Sigmoid colon (tissue), 7 donors: ENCODE measurements at regions of chr14 and their contacts with region 1.

Region 1: GRCh38 chr14:91901449-91902226 is 34.3 kb upstream of the TC2N start:
- DNase-seq: peak; percentile 90
- H3K4me3 ChIP-seq: no peak overlapping the region
- H3K27ac ChIP-seq: peak overlapping the region; percentile 60 to 83 (median 64)
- H3K4me1 ChIP-seq: peaks cover 0 to 86% (median 67%) of the 10 kb centered on the region in 4 donors
- H3K27me3 ChIP-seq: no peaks in the 10 kb centered on the region
- CTCF ChIP-seq: no peak
- EP300 ChIP-seq: no peak
- POLR2A ChIP-seq: no peak

Region 2: GRCh38 chr14:91510174-91511042 is 391.2 kb before region 1 on chr14 and contains the start of gene PPP4R3A:
- intact Hi-C with region 1: loop called (anchors 5 kb)
- DNase-seq: peak; percentile 97
- H3K4me3 ChIP-seq: peak within 1 kb of the TSS; percentile 86 to 100 (median 96)
- H3K27ac ChIP-seq: peak within 1 kb of the TSS; percentile 99 to 100 (median 100)
- H3K4me1 ChIP-seq: peaks cover 0 to 36% (median 30%) of the 10 kb centered on the region in 4 donors
- H3K27me3 ChIP-seq: no peaks in the 10 kb centered on the region
- CTCF ChIP-seq: no peak
- EP300 ChIP-seq: peak in 3 of 4 donors; percentile 22 to 59 (median 46)
- POLR2A ChIP-seq: peak; percentile 68 to 82
- total RNA-seq, gene PPP4R3A: 69.6 to 78.9 (median 75.1) TPM

Region 3: GRCh38 chr14:91836119-91836881 is 65.3 kb before region 1 on chr14:
- intact Hi-C with region 1: loop called (anchors 10 kb)
- DNase-seq: peak; percentile 91
- H3K4me3 ChIP-seq: peak overlapping the region; percentile 43 to 76 (median 66)
- H3K27ac ChIP-seq: peak overlapping the region; percentile 68 to 83 (median 80)
- H3K4me1 ChIP-seq: peaks cover 0 to 17% (median 12%) of the 10 kb centered on the region in 4 donors
- H3K27me3 ChIP-seq: peaks cover 0 to 24% (median 0%) of the 10 kb centered on the region in 3 donors
- CTCF ChIP-seq: no peak
- EP300 ChIP-seq: no peak
- POLR2A ChIP-seq: peak in 1 of 2 donors; percentile 19

Region 4: DNA sequence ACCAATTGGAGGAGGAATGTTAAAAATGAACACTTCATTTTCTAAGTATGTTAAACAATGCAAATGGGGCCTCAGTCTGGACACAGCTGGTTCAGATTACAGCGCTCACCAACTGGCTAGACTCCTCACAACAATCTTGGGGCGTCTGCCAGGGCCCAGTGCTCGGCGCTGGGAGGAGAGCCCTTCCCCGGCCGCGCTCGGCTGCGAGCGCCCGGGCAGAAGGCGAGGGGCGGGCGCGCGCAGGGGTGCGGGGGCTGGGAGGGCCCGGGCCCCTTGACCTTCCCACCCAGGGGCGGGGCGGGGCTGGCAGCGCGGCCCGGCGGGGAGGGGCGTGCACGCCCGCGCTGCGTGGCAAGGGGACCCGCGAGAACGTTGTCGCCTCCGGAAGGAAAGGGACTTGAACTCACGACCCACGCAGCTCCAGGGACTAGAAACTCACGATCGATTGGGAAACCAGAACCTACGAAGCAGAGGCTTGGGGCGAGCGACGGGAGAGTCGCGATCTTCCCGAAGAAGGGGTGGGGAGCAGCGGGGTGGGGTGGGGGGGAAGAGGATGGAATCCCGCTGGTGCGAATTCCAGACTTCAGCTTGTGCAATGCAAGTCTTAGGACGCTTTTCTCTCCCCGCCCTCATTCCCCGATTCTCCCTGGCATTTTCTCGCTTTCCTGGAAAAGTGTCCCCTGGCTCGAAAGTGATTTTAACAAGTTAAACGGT is 46.0 kb after region 1 on chr14 and contains the start of gene FBLN5:
- intact Hi-C with region 1: loop called (anchors 5 kb)
- DNase-seq: peak; percentile 84
- H3K4me3 ChIP-seq: peak within 1 kb of the TSS; percentile 43 to 63 (median 58)
- H3K27ac ChIP-seq: peak within 1 kb of the TSS; percentile 66 to 87 (median 75)
- H3K4me1 ChIP-seq: peaks cover 0 to 44% (median 12%) of the 10 kb centered on the region in 4 donors
- H3K27me3 ChIP-seq: no peaks in the 10 kb centered on the region
- CTCF ChIP-seq: no peak
- EP300 ChIP-seq: no peak
- POLR2A ChIP-seq: no peak
- total RNA-seq, gene FBLN5: 91.8 to 253 (median 103) TPM

Region 5: GRCh38 chr14:92093320-92093719 is 191.7 kb after region 1 on chr14:
- intact Hi-C with region 1: no loop called
- DNase-seq: no peak
- H3K4me3 ChIP-seq: no peak overlapping the region
- H3K27ac ChIP-seq: no peak overlapping the region
- H3K4me1 ChIP-seq: peaks cover 0 to 2% (median 0%) of the 10 kb centered on the region in 4 donors
- H3K27me3 ChIP-seq: no peaks in the 10 kb centered on the region
- CTCF ChIP-seq: no peak
- EP300 ChIP-seq: no peak
- POLR2A ChIP-seq: no peak